T-cell (primary cell): ENCODE measurements at regions of chr5 and their contacts with region 1.

Region 1: GRCh38 chr5:138668376-138669079 is 84.7 kb upstream of the CTNNA1 start:
- DNase-seq: peak in 33 of 35 experiments; percentile 14 to 63 (median 42)
- ATAC-seq: peak; percentile 58 to 96 (median 92)
- H3K4me3 ChIP-seq: no peak overlapping the region
- H3K4me3 Mint-ChIP-seq: peak overlapping the region in 1 of 3 donors; percentile 43
- H3K27ac ChIP-seq: no peak overlapping the region
- H3K27ac Mint-ChIP-seq: peak overlapping the region in 1 of 2 donors; percentile 34
- H3K4me1 ChIP-seq: peaks cover 12 to 24% of the 10 kb centered on the region in 2 experiments
- H3K4me1 Mint-ChIP-seq: peaks cover 25 to 37% (median 27%) of the 10 kb centered on the region in 3 donors
- H3K27me3 ChIP-seq: peaks cover 6 to 84% of the 10 kb centered on the region in 2 experiments
- H3K27me3 Mint-ChIP-seq: peaks cover 66 to 86% of the 10 kb centered on the region in 2 donors

Region 2: GRCh38 chr5:138623053-138623452 is 45.5 kb before region 1 on chr5:
- CTCF ChIA-PET with region 1: no interaction called
- POLR2A ChIA-PET with region 1: no interaction called
- DNase-seq: no peak
- ATAC-seq: no peak
- H3K4me3 ChIP-seq: no peak overlapping the region
- H3K4me3 Mint-ChIP-seq: no peak overlapping the region
- H3K27ac ChIP-seq: no peak overlapping the region
- H3K27ac Mint-ChIP-seq: no peak overlapping the region
- H3K4me1 ChIP-seq: no peaks in the 10 kb centered on the region
- H3K4me1 Mint-ChIP-seq: no peaks in the 10 kb centered on the region
- H3K27me3 ChIP-seq: peaks cover 0 to 44% of the 10 kb centered on the region in 2 experiments
- H3K27me3 Mint-ChIP-seq: peaks cover 52 to 58% of the 10 kb centered on the region in 2 donors

Region 3: GRCh38 chr5:138719811-138720210 is 51.3 kb after region 1 on chr5:
- CTCF ChIA-PET with region 1: interaction called in 1 of 2 experiments, 7 read pairs
- POLR2A ChIA-PET with region 1: interaction called in 1 of 2 experiments, 21 read pairs
- DNase-seq: no peak
- ATAC-seq: no peak
- H3K4me3 ChIP-seq: no peak overlapping the region
- H3K4me3 Mint-ChIP-seq: no peak overlapping the region
- H3K27ac ChIP-seq: no peak overlapping the region
- H3K27ac Mint-ChIP-seq: no peak overlapping the region
- H3K4me1 ChIP-seq: no peaks in the 10 kb centered on the region
- H3K4me1 Mint-ChIP-seq: no peaks in the 10 kb centered on the region
- H3K27me3 ChIP-seq: peaks cover 2 to 40% of the 10 kb centered on the region in 2 experiments
- H3K27me3 Mint-ChIP-seq: peaks cover 38 to 48% of the 10 kb centered on the region in 2 donors

Region 4: GRCh38 chr5:139394123-139394653 is 725.7 kb after region 1 on chr5:
- CTCF ChIA-PET with region 1: interaction called in 1 of 2 experiments, 10 read pairs
- POLR2A ChIA-PET with region 1: no interaction called
- DNase-seq: peak in 20 of 35 experiments; percentile 26 to 68 (median 49)
- ATAC-seq: peak in 1 of 4 experiments; percentile 30
- H3K4me3 ChIP-seq: peak overlapping the region; percentile 83 to 89
- H3K4me3 Mint-ChIP-seq: peak overlapping the region; percentile 84 to 91 (median 89)
- H3K27ac ChIP-seq: no peak overlapping the region
- H3K27ac Mint-ChIP-seq: no peak overlapping the region
- H3K4me1 ChIP-seq: peaks cover 2 to 53% of the 10 kb centered on the region in 2 experiments
- H3K4me1 Mint-ChIP-seq: peaks cover 30 to 37% (median 34%) of the 10 kb centered on the region in 3 donors
- H3K27me3 ChIP-seq: peaks cover 0 to 9% of the 10 kb centered on the region in 2 experiments
- H3K27me3 Mint-ChIP-seq: no peaks in the 10 kb centered on the region